ENCODE measurements at regions of chr1 and their contacts with region 1.

Region 1: DNA sequence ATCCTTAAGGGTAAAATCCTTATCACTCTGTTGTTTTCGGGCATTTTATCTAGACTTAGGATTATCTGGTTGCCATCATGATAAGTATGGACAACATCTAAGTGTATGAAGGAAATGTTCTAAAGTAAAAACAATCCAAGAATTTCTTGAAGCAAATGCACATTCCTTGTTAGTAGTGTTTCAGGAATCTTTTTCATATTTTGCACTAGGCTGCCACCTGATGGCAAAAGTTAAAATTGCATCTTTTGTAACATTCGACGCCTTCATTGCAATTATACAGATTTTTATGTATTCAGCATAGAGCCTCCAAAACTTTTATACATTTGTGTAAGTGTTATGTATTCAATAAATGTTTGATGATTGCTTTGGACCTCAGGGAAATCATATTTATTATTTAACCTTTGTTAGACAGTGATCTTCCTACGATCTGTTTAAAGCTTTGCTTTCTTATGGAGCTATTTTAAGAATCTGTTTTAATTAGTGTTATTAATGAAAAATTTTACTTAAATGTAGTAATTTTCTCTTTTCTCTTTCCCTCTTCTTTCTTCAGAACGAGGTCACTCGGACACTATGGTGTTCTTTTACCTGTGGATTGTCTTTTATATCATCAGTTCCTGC is 49.4 kb upstream of the KIAA1614 start:
- DNase-seq: peak; percentile 43
- ATAC-seq: peak; percentile 55
- H3K4me3 ChIP-seq: no peak overlapping the region
- H3K27ac ChIP-seq: no peak overlapping the region
- H3K4me1 ChIP-seq: no peaks in the 10 kb centered on the region
- H3K27me3 ChIP-seq: no peaks in the 10 kb centered on the region
- CTCF ChIP-seq: peak; percentile 53 to 84 (median 74)
- POLR2A ChIP-seq: no peak
- RAD21 ChIP-seq: peak; percentile 89

Region 2: DNA sequence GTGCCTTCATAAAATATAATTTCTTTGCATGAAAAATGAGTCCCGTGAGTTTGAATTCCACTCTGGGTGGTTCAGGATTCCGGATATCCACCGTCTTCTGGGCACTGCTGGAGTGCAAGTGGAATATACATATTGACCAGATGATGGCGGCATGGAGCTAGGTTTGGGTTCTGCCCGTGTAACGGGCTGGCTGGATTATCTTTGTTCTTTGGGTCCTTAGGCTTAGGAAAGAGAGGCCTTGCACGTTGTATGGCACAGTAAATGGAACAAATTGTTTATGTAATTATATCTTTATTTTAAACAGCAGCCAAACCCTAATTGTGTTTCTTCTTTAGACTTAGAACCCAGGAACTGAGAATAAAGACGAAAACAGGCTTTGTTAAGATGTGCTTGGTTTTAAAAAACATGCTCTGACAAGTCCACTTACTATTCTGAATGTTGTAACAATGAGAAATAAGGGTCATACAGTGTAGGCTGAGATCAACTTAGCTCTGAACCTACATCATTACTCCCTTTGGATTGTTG is 347.3 kb before region 1 on chr1:
- CTCF ChIA-PET with region 1: interaction called, 73 read pairs
- POLR2A ChIA-PET with region 1: interaction called, 6 read pairs
- RAD21 ChIA-PET with region 1: interaction called, 3 to 8 read pairs
- intact Hi-C with region 1: loop called (anchors 5 kb)
- DNase-seq: peak; percentile 73
- ATAC-seq: peak; percentile 99
- H3K4me3 ChIP-seq: no peak overlapping the region
- H3K27ac ChIP-seq: peak overlapping the region; percentile 11; the same call in 1 of the 2 replicates
- H3K4me1 ChIP-seq: peaks cover 4 to 8% of the 10 kb centered on the region in 2 experiments; a peak in 2 of 4 replicates
- H3K27me3 ChIP-seq: no peaks in the 10 kb centered on the region
- CTCF ChIP-seq: peak; percentile 64 to 83 (median 80)
- POLR2A ChIP-seq: no peak
- RAD21 ChIP-seq: peak; percentile 94

Region 3: DNA sequence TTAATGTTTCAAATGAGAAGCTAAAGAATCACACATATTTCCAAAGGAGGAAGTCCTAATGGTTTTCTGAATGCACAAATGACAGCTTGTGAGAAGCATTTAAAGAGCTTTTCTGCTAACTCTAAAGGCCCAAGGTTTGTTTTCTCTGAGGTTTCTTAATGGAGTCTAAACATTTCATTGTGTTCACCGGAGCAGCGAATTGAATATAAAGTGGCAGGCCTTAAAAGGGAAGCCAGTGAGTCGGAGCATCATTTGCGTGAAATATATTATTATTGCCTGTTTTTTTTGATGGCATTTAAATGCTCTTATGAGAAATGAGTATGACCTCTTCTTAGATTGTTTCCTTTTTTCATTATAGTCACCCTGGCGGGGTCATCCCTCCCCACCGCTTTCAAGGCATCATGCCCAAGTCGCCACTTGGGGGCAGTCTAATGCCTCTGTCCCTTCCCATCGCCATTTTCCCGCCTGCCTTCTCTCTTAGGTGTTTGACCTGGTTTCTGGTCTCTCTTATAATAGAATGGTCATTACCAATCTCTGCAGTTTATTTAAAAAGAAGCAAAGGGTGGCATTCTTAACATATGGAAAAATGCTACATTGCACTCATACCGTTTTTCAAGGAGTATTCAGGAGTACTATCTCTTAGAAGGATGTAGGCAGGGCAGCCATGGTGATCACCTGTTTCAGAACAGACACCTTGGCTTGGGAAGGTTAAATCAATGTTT is 329.8 kb before region 1 on chr1:
- CTCF ChIA-PET with region 1: interaction called, 18 read pairs
- POLR2A ChIA-PET with region 1: no interaction called
- RAD21 ChIA-PET with region 1: interaction called in 1 of 2 experiments, 3 read pairs
- intact Hi-C with region 1: loop called (anchors 5 kb)
- DNase-seq: peak; percentile 56
- ATAC-seq: peak; percentile 97
- H3K4me3 ChIP-seq: no peak overlapping the region
- H3K27ac ChIP-seq: no peak overlapping the region
- H3K4me1 ChIP-seq: 0 out of 4 replicates have a peak, but pooled peaks cover 0 to 3% of the 10 kb centered on the region in 2 experiments
- H3K27me3 ChIP-seq: no peaks in the 10 kb centered on the region
- CTCF ChIP-seq: peak; percentile 84 to 94 (median 91)
- POLR2A ChIP-seq: no peak
- RAD21 ChIP-seq: peak; percentile 94

Region 4: DNA sequence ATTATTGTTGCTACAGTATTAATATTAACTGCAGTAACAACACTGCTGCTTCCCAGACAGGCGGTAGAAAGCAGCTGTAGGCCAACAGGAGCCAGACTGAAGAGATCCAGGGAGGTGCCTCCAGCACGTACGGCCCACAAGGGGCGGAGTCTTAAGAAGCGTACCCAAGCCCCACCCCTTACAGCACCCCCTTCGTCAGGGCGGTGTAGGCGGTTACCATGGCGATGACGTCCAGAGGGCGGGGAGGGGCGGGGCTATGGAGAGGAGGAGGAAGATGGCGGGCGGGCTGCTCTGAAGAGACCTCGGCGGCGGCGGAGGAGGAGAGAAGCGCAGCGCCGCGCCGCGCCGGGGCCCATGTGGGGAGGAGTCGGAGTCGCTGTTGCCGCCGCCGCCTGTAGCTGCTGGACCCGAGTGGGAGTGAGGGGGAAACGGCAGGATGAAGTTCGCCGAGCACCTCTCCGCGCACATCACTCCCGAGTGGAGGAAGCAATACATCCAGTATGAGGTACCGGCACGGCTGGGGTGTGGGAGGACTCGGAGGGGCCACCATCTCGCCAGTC is 231.4 kb before region 1 on chr1 and contains the start of gene XPR1:
- CTCF ChIA-PET with region 1: no interaction called
- POLR2A ChIA-PET with region 1: no interaction called
- RAD21 ChIA-PET with region 1: no interaction called
- intact Hi-C with region 1: loop called (anchors 5 kb)
- DNase-seq: peak; percentile 97
- ATAC-seq: peak; percentile 98
- H3K4me3 ChIP-seq: peak within 1 kb of the TSS; percentile 67 to 74
- H3K27ac ChIP-seq: peak within 1 kb of the TSS; percentile 68
- H3K4me1 ChIP-seq: peaks cover 10 to 17% of the 10 kb centered on the region in 2 experiments; a peak in 3 of 4 replicates
- H3K27me3 ChIP-seq: no peaks in the 10 kb centered on the region
- CTCF ChIP-seq: peak in 2 of 3 experiments; percentile 10 to 21; a peak in 3 of 6 replicates
- POLR2A ChIP-seq: peak; percentile 66
- RAD21 ChIP-seq: no peak
- total RNA-seq, gene XPR1: 19.9 TPM

Region 5: GRCh38 chr1:180778782-180779398 is 84.4 kb before region 1 on chr1:
- CTCF ChIA-PET with region 1: no interaction called
- POLR2A ChIA-PET with region 1: no interaction called
- RAD21 ChIA-PET with region 1: interaction called in 1 of 2 experiments, 3 read pairs
- intact Hi-C with region 1: loop called (anchors 5 kb)
- DNase-seq: peak; percentile 10
- ATAC-seq: peak; percentile 80
- H3K4me3 ChIP-seq: no peak overlapping the region
- H3K27ac ChIP-seq: no peak overlapping the region
- H3K4me1 ChIP-seq: no peaks in the 10 kb centered on the region
- H3K27me3 ChIP-seq: no peaks in the 10 kb centered on the region
- CTCF ChIP-seq: peak; percentile 44 to 73 (median 72)
- POLR2A ChIP-seq: no peak
- RAD21 ChIP-seq: peak; percentile 58

Region 6: DNA sequence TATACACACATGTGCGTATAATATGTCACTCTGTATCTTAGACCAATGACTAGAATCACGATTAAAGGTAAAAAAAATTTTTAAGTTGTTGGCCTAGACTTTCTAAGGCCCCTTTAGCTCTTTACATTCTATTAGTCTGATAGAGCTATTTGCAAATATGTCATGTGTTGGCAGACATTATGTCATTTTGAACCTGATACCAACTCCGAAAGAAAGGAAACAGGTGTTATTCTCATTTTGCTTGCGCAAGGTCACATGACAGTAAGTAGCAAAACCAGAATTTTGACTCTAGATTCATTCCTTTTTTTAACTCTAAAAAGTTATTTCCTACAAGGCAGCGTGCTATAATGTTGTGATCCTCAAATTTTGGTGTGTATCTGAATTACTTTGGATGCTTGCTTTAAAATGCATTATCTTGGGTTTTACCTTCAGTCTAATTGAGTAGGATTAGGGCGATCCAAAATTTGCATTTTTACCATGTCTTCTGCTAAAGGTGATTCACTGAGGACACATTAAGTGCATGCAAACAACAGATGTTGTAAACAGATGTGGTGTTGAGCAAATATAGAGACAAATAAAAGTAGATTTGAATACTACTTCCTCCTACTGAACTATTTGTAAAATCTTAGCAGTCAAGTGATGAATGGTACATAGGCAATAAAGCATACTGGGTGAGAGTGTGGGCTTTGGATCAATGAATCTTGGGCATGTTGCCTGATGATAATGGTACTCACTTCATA is 14.1 kb before region 1 on chr1:
- CTCF ChIA-PET with region 1: no interaction called
- POLR2A ChIA-PET with region 1: no interaction called
- RAD21 ChIA-PET with region 1: no interaction called
- intact Hi-C with region 1: no loop called
- DNase-seq: no peak
- ATAC-seq: no peak
- H3K4me3 ChIP-seq: no peak overlapping the region
- H3K27ac ChIP-seq: no peak overlapping the region
- H3K4me1 ChIP-seq: no peaks in the 10 kb centered on the region
- H3K27me3 ChIP-seq: no peaks in the 10 kb centered on the region
- CTCF ChIP-seq: no peak
- POLR2A ChIP-seq: no peak
- RAD21 ChIP-seq: no peak

Measured in HCT116 (cell line).